ENCODE measurements at regions of chr1 and their contacts with region 1.

Region 1: GRCh38 chr1:40722636-40723035 is 31.1 kb downstream of the NFYC start:
- DNase-seq: no peak
- ATAC-seq: peak; percentile 39; the same call in 1 of the 3 replicates
- H3K4me3 ChIP-seq: no peak overlapping the region
- H3K27ac ChIP-seq: no peak overlapping the region
- H3K4me1 ChIP-seq: no peaks in the 10 kb centered on the region
- H3K27me3 ChIP-seq: no peaks in the 10 kb centered on the region
- CTCF ChIP-seq: peak in 2 of 3 experiments; percentile 12 to 32; a peak in 1 of 6 replicates
- EP300 ChIP-seq: no peak
- POLR2A ChIP-seq: no peak
- RAD21 ChIP-seq: peak; percentile 55

Region 2: DNA sequence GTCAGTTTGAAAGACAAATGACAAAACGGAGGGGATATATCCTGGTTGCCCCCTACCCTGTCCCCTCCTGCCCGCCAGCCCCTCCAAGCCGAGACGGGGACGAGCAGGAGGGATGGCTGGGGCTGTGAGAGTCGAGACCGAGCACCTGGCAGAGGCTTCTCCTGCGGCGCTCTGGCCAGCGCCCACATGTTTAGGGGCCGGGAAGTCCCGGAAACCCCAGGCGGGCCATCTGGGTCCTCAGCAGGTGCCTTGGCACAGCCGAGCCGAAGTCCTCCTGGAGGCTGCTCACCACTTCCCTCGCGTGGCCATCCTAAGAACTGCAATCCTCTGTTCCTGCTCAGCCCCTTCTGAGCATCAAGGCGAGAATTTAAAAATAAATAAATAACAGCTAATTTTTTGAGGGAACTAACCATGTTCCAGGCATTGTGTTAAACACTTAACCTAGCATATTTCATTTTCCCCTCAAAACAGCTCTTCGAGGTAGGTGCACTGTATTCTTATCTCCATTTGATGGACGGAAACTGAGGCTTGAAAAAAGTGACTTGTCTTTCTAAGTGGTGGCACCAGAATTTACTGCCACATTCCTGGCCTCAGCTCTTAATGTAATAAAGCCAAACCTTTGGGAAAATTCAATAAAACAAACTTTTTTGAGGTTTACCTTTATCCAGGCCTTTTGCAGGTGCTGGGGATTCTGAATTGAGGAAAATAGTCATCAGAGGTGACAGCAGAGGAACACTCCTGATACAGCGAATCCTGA is 53.7 kb before region 1 on chr1:
- CTCF ChIA-PET with region 1: interaction called, 18 read pairs
- POLR2A ChIA-PET with region 1: no interaction called
- RAD21 ChIA-PET with region 1: interaction called, 3 read pairs
- SMC1A ChIA-PET with region 1: interaction called, 9 read pairs
- in situ Hi-C with region 1: no loop called
- intact Hi-C with region 1: no loop called
- DNase-seq: peak; percentile 43
- ATAC-seq: peak; percentile 83
- H3K4me3 ChIP-seq: peak overlapping the region; percentile 59; the same call in 1 of the 2 replicates
- H3K27ac ChIP-seq: no peak overlapping the region
- H3K4me1 ChIP-seq: peaks cover 7% of the 10 kb centered on the region
- H3K27me3 ChIP-seq: no peaks in the 10 kb centered on the region
- CTCF ChIP-seq: peak; percentile 91
- EP300 ChIP-seq: 0 out of 4 replicates have a peak, but pooled peaks of 1 of the 2 experiments have one; percentile 34
- POLR2A ChIP-seq: no peak
- RAD21 ChIP-seq: peak; percentile 73

Region 3: DNA sequence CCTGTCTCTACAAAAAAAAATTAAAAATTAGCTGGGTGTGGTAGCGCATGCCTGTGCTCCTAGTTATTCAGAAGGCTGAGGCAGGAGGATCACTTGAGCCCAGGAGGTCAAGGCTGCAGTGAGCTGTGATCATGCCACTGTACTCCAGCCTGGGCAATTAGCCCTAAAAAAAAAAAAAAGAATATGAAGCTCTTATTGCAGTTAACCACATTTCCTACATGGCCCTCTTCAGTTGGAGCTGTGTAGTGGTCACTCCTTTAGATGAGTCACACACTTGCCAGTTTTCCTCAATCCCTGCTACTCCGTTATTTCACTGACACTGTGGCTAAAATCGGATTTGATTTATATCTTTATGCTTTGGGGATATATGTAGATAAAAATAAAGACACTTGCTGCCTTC is 19.3 kb before region 1 on chr1:
- CTCF ChIA-PET with region 1: interaction called, 4 read pairs
- POLR2A ChIA-PET with region 1: interaction called, 6 read pairs
- RAD21 ChIA-PET with region 1: interaction called, 3 read pairs
- SMC1A ChIA-PET with region 1: interaction called, 26 read pairs
- in situ Hi-C with region 1: no loop called
- intact Hi-C with region 1: no loop called
- DNase-seq: no peak
- ATAC-seq: no peak
- H3K4me3 ChIP-seq: no peak overlapping the region
- H3K27ac ChIP-seq: peak overlapping the region; percentile 71
- H3K4me1 ChIP-seq: peaks cover 46% of the 10 kb centered on the region
- H3K27me3 ChIP-seq: no peaks in the 10 kb centered on the region
- CTCF ChIP-seq: no peak
- EP300 ChIP-seq: no peak
- POLR2A ChIP-seq: no peak
- RAD21 ChIP-seq: no peak

Region 4: DNA sequence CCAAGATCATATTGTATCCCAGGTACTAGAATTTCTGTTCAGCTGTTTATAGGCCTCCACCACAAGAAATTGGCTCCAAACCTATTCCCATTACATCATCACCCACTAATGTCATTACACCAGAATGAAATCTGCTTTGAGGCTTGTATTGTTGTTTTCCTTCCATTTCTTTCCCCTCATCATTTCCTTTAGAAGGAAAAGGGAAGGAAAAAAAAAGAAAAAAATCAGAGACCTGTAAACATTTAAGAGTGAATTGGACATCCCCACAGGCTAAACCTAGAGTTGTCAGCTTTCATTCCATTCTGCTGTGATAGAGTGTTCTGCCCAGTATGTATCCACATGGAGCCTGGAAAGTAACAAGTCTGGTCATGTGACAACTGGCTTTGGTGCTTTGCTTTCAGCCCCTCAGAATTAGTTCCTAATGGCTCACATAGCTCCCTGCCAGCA is 13.5 kb after region 1 on chr1:
- CTCF ChIA-PET with region 1: interaction called, 9 read pairs
- POLR2A ChIA-PET with region 1: interaction called, 8 read pairs
- RAD21 ChIA-PET with region 1: interaction called, 3 read pairs
- SMC1A ChIA-PET with region 1: interaction called, 10 read pairs
- in situ Hi-C with region 1: no loop called
- intact Hi-C with region 1: no loop called
- DNase-seq: no peak
- ATAC-seq: no peak
- H3K4me3 ChIP-seq: no peak overlapping the region
- H3K27ac ChIP-seq: no peak overlapping the region
- H3K4me1 ChIP-seq: no peaks in the 10 kb centered on the region
- H3K27me3 ChIP-seq: no peaks in the 10 kb centered on the region
- CTCF ChIP-seq: no peak
- EP300 ChIP-seq: no peak
- POLR2A ChIP-seq: no peak
- RAD21 ChIP-seq: no peak

Region 5: GRCh38 chr1:40825435-40825788 is 102.8 kb after region 1 on chr1:
- CTCF ChIA-PET with region 1: no interaction called
- POLR2A ChIA-PET with region 1: no interaction called
- RAD21 ChIA-PET with region 1: no interaction called
- SMC1A ChIA-PET with region 1: no interaction called
- in situ Hi-C with region 1: no loop called
- intact Hi-C with region 1: no loop called
- DNase-seq: no peak
- ATAC-seq: peak; percentile 91
- H3K4me3 ChIP-seq: no peak overlapping the region
- H3K27ac ChIP-seq: no peak overlapping the region
- H3K4me1 ChIP-seq: peaks cover 13% of the 10 kb centered on the region
- H3K27me3 ChIP-seq: no peaks in the 10 kb centered on the region
- CTCF ChIP-seq: no peak
- EP300 ChIP-seq: no peak
- POLR2A ChIP-seq: no peak
- RAD21 ChIP-seq: no peak

Region 6: DNA sequence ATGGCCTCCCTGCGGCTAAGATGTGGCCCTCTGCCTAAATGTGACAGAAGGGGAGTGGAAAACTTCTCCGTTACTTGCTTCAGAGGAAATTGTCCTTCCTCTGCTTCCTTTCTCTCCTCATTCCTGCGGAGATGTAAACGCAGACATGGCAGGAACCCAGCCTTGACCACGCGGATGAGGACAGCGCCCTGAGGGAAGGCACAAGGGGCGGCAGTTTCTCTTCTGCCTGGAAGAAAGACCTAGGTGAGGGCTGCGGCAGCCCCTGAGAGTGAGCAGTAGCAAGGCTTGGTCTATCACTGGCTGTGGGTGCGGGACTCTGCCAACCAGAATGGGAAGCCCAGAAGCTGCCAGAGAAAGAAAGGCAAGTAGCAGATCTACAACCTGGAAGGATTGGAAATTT is 242.9 kb after region 1 on chr1:
- CTCF ChIA-PET with region 1: no interaction called
- POLR2A ChIA-PET with region 1: no interaction called
- RAD21 ChIA-PET with region 1: no interaction called
- SMC1A ChIA-PET with region 1: no interaction called
- in situ Hi-C with region 1: no loop called
- intact Hi-C with region 1: no loop called
- DNase-seq: no peak
- ATAC-seq: no peak
- H3K4me3 ChIP-seq: no peak overlapping the region
- H3K27ac ChIP-seq: no peak overlapping the region
- H3K4me1 ChIP-seq: no peaks in the 10 kb centered on the region
- H3K27me3 ChIP-seq: no peaks in the 10 kb centered on the region
- CTCF ChIP-seq: no peak
- EP300 ChIP-seq: no peak
- POLR2A ChIP-seq: no peak
- RAD21 ChIP-seq: no peak

Measured in GM12878 (cell line).